Activated CD4-positive, alpha-beta T cell treated with anti-CD3 and anti-CD28 coated beads, Interleukin-2, amount 10 ng/mL, durations not matched to agents 7 days and 5 days (primary cell): ENCODE measurements at regions of chr15 and their contacts with region 1.

Region 1: GRCh38 chr15:83011271-83012075 is at the start of gene C15orf40:
- DNase-seq: peak; percentile 80
- H3K4me3 Mint-ChIP-seq: peak within 1 kb of the TSS; percentile 98
- H3K27ac Mint-ChIP-seq: peak within 1 kb of the TSS; percentile 95
- H3K4me1 Mint-ChIP-seq: peaks cover 47% of the 10 kb centered on the region
- H3K27me3 Mint-ChIP-seq: no peaks in the 10 kb centered on the region
- total RNA-seq, gene C15orf40: 21.5 to 24.5 TPM

Region 2: DNA sequence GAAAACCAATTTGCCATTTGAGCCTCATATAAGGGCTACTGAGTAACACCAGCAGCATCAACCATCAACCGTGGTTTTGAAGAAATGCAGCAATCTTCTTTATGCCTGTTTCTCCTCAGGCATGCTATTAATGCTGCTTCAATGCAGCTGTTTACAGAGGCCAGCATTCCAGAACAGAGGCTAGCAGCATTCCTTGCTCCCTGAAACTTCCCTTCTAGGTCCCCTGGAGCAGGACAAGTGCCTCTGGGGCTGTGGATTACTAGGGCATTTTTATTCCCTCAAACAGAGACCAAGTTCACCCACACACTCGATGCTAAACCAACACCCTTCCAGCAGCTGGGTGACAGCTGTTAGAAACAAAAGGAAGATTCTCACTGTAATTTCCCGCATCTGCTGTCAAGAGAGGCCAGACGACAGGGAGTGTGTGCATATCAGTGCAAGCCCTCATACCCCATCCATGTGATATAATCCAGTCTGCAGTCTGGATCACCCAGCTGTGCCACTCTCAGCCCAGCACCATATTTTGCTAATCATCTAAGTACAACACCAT is 116.4 kb before region 1 on chr15:
- CTCF ChIA-PET with region 1: no interaction called
- POLR2A ChIA-PET with region 1: no interaction called
- DNase-seq: no peak
- H3K4me3 Mint-ChIP-seq: no peak overlapping the region
- H3K27ac Mint-ChIP-seq: no peak overlapping the region
- H3K4me1 Mint-ChIP-seq: no peaks in the 10 kb centered on the region
- H3K27me3 Mint-ChIP-seq: peaks cover 9% of the 10 kb centered on the region

Region 3: DNA sequence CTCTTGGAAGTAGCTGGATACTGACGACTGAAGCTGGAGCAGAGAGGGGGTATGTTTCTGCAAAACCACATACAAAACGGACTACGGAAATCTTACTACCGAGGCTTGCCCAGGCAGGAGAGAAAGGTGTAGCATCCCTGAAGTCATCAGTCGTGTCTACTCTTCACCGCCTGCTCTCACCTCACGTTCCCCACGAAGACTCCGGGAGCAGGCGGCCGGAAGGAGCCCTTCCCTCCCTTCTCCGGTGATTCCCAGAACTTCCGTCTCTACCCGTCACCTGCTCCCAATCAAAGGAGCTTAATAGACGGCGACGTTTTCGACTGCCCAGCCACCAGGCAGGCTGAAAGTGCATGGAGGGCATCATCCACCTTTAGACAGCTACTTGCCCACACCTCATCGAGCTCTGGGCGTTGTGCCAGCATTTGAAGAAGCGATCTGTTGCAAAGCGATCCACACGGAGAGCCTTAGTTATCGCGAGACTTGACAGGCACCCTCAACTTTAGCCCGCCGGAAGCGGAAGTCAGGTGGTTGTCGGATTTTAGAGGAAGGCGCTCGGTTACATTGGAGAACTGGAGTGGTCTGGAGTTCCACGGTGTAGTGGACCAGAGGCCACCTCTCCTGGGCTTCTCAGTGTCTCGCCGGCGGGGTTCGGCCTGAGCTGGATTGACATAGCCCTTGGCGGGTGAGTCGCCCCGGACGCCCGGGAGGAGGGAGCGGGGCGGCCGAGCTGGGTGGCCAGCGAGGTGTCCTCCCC is 25.6 kb before region 1 on chr15 and contains the start of gene RAMAC:
- CTCF ChIA-PET with region 1: interaction called, 13 read pairs
- POLR2A ChIA-PET with region 1: no interaction called
- DNase-seq: peak; percentile 95
- H3K4me3 Mint-ChIP-seq: peak within 1 kb of the TSS; percentile 98
- H3K27ac Mint-ChIP-seq: peak within 1 kb of the TSS; percentile 96
- H3K4me1 Mint-ChIP-seq: peaks cover 29% of the 10 kb centered on the region
- H3K27me3 Mint-ChIP-seq: no peaks in the 10 kb centered on the region
- total RNA-seq, gene RAMAC: 23.7 to 26.5 TPM

Region 4: DNA sequence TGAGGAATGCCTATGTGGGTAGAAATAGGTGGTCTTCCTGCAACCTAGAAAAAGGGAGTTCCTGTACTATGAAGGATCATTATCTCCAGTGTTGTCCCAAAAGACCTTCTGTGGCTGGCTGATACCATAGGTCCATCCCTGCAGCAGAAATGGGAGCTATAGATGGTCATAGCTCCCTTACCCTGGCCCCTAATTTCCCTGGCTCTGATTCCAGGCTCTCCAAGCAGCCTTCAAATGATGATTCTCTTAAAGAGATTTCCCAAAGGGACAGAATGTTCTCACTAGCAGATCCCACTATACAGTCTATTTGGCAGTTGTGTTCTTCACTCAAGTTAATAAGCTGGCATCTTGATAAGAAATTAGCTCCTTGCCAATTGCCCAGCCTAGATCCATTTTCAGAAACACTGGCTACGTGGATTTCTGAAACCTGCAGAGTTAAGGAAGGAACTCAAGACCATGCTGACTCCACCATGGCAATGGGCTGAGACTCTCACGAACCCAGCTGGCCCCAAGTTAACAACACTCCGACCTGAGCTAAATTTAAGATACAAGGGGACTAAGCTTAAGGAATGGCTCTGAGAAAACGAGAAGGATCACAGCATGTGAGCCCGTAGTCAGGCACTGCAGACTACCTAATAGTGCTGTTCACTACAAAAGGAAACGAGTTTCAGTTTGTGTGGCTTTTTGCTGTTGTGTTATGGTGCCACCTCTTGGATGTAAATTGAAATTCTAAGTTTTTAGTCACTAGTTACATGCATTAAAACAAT is 11.4 kb before region 1 on chr15:
- CTCF ChIA-PET with region 1: interaction called, 16 read pairs
- POLR2A ChIA-PET with region 1: no interaction called
- DNase-seq: peak; percentile 59
- H3K4me3 Mint-ChIP-seq: peak overlapping the region; percentile 49
- H3K27ac Mint-ChIP-seq: peak overlapping the region; percentile 47
- H3K4me1 Mint-ChIP-seq: peaks cover 8% of the 10 kb centered on the region
- H3K27me3 Mint-ChIP-seq: no peaks in the 10 kb centered on the region